Caco-2 (cell line): ENCODE measurements at regions of chr2 and their contacts with region 1.

Region 1: GRCh38 chr2:55419679-55420438 is at the start of gene CCDC88A:
- DNase-seq: peak; percentile 96 to 97
- H3K4me3 ChIP-seq: peak within 1 kb of the TSS; percentile 74
- H3K4me3 Mint-ChIP-seq: peak within 1 kb of the TSS; percentile 93
- H3K27ac Mint-ChIP-seq: no peak within 1 kb of the TSS
- H3K4me1 ChIP-seq: no peaks in the 10 kb centered on the region; the same call in 1 of the 2 replicates
- H3K4me1 Mint-ChIP-seq: peaks cover 13% of the 10 kb centered on the region
- H3K27me3 ChIP-seq: no peaks in the 10 kb centered on the region
- H3K27me3 Mint-ChIP-seq: peaks cover 11% of the 10 kb centered on the region
- CTCF ChIP-seq: peak; percentile 6 to 31
- total RNA-seq, gene CCDC88A: 6.4 and 7.7 TPM in 2 replicates

Region 2: GRCh38 chr2:55519938-55520885 is 100.4 kb after region 1 on chr2:
- CTCF ChIA-PET with region 1: no interaction called
- POLR2A ChIA-PET with region 1: no interaction called
- intact Hi-C with region 1: loop called (anchors 5 kb)
- DNase-seq: peak in 1 of 2 experiments; percentile 44
- H3K4me3 ChIP-seq: peak overlapping the region; percentile 65
- H3K4me3 Mint-ChIP-seq: peak overlapping the region; percentile 94
- H3K27ac Mint-ChIP-seq: peak overlapping the region; percentile 88
- H3K4me1 ChIP-seq: no peaks in the 10 kb centered on the region
- H3K4me1 Mint-ChIP-seq: peaks cover 7% of the 10 kb centered on the region
- H3K27me3 ChIP-seq: no peaks in the 10 kb centered on the region
- H3K27me3 Mint-ChIP-seq: no peaks in the 10 kb centered on the region
- CTCF ChIP-seq: no peak